Activated B cell treated with CpG ODN at 0.5 μM for 24 hours (primary cell): ENCODE measurements at regions of chr2 and their contacts with region 1.

Region 1: DNA sequence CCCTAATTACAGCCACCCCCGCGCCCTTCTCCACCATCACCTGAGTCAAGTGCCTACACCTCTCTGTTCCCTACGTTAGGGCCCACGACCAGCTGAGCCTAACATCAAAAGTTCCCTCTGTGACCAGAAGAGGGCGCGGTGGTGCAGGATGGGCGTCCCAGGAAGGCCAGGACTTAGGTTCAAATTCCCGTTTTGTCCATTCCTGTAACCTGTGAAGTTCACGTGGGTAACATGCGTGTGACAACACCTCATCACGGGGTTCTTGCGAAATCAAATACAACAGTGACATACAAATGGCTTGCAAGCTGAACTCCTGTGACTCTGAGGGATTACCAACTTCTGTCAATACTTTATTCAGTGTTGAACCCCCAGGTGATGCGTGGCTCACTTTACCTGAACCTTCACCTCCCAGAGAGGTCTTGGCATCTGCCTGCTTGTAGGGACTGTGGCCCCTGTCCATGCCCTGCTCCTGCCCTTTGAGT is 207.9 kb downstream of the ARL4C start:
- DNase-seq: peak; percentile 50
- ATAC-seq: no peak
- H3K4me3 Mint-ChIP-seq: no peak overlapping the region
- H3K27ac Mint-ChIP-seq: no peak overlapping the region
- H3K4me1 Mint-ChIP-seq: peaks cover 54% of the 10 kb centered on the region
- H3K27me3 Mint-ChIP-seq: peaks cover 17% of the 10 kb centered on the region
- CTCF ChIP-seq: no peak

Region 2: DNA sequence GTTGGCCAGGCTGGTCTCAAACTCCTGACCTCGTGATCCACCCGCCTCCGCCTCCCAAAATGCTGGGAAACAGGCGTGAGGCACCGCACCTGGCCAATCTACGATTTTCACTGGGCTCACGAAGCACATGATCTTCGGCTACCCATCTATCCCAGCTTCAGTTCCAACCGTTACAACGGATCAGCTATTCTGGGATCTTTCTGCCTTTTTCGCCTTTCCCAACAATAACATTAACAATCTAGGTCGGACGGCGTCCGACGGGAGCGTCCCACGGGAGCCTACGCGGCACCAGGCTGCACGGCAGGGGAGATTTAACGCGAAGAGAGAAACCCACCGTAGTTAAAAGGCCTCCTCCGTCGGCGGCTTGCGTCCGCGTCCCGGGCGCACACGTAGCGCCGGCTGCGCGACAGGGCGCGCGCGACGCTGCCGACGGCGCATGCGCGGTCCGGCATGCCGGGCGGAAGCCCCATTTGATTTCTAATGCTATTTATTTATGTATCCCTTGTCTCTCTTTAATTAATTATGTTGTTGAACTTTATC is 421.0 kb before region 1 on chr2 and contains the start of gene MSL3B:
- CTCF ChIA-PET with region 1: no interaction called
- POLR2A ChIA-PET with region 1: no interaction called
- intact Hi-C with region 1: no loop called
- DNase-seq: peak; percentile 57
- ATAC-seq: peak; percentile 87
- H3K4me3 Mint-ChIP-seq: peak within 1 kb of the TSS; percentile 93
- H3K27ac Mint-ChIP-seq: peak within 1 kb of the TSS; percentile 80
- H3K4me1 Mint-ChIP-seq: peaks cover 18% of the 10 kb centered on the region
- H3K27me3 Mint-ChIP-seq: no peaks in the 10 kb centered on the region
- CTCF ChIP-seq: no peak

Region 3: GRCh38 chr2:234135720-234136221 is 153.2 kb before region 1 on chr2:
- CTCF ChIA-PET with region 1: interaction called, 14 read pairs
- POLR2A ChIA-PET with region 1: interaction called, 5 read pairs
- intact Hi-C with region 1: loop called (anchors 1 kb)
- DNase-seq: peak; percentile 32
- ATAC-seq: peak; percentile 75
- H3K4me3 Mint-ChIP-seq: no peak overlapping the region
- H3K27ac Mint-ChIP-seq: peak overlapping the region; percentile 20
- H3K4me1 Mint-ChIP-seq: peaks cover 8% of the 10 kb centered on the region
- H3K27me3 Mint-ChIP-seq: peaks cover 30% of the 10 kb centered on the region
- CTCF ChIP-seq: no peak

Region 4: GRCh38 chr2:234164493-234165413 is 124.3 kb before region 1 on chr2:
- CTCF ChIA-PET with region 1: interaction called, 3 read pairs
- POLR2A ChIA-PET with region 1: interaction called, 8 read pairs
- intact Hi-C with region 1: loop called (anchors 2 kb)
- DNase-seq: peak; percentile 62
- ATAC-seq: peak; percentile 97
- H3K4me3 Mint-ChIP-seq: peak overlapping the region; percentile 48
- H3K27ac Mint-ChIP-seq: peak overlapping the region; percentile 74
- H3K4me1 Mint-ChIP-seq: peaks cover 54% of the 10 kb centered on the region
- H3K27me3 Mint-ChIP-seq: peaks cover 3% of the 10 kb centered on the region
- CTCF ChIP-seq: no peak

Region 5: GRCh38 chr2:234308813-234309195 is 19.8 kb after region 1 on chr2:
- CTCF ChIA-PET with region 1: interaction called, 9 read pairs
- POLR2A ChIA-PET with region 1: interaction called, 39 read pairs
- intact Hi-C with region 1: loop called (anchors 1 kb)
- DNase-seq: peak; percentile 43
- ATAC-seq: peak; percentile 93
- H3K4me3 Mint-ChIP-seq: peak overlapping the region; percentile 50
- H3K27ac Mint-ChIP-seq: peak overlapping the region; percentile 74
- H3K4me1 Mint-ChIP-seq: peaks cover 35% of the 10 kb centered on the region
- H3K27me3 Mint-ChIP-seq: peaks cover 33% of the 10 kb centered on the region
- CTCF ChIP-seq: no peak

Region 6: DNA sequence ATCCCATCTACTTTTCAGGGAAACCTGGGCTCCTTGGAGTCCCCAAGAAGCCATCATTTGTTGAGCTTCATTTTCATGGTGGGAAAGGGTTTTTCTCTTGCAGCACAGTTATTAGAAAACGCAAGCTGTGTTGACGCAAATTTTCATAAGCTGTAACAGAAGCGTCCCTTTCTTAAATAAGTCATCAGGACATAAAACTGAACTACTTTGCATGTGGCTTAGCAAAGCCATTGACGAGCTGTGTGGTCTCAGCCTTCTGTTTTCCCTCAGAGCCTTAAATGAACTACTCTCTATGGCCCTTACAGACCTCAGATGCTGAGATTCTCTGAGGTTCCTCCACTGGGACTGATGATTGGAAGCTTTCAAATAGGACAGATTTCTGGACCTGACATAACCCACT is 122.8 kb after region 1 on chr2:
- CTCF ChIA-PET with region 1: interaction called, 7 read pairs
- POLR2A ChIA-PET with region 1: interaction called, 4 read pairs
- intact Hi-C with region 1: loop called (anchors 5 kb)
- DNase-seq: no peak
- ATAC-seq: peak; percentile 85
- H3K4me3 Mint-ChIP-seq: peak overlapping the region; percentile 44
- H3K27ac Mint-ChIP-seq: no peak overlapping the region
- H3K4me1 Mint-ChIP-seq: peaks cover 58% of the 10 kb centered on the region
- H3K27me3 Mint-ChIP-seq: no peaks in the 10 kb centered on the region
- CTCF ChIP-seq: no peak

Region 7: GRCh38 chr2:234446404-234447076 is 157.5 kb after region 1 on chr2:
- CTCF ChIA-PET with region 1: interaction called, 3 read pairs
- POLR2A ChIA-PET with region 1: no interaction called
- intact Hi-C with region 1: loop called (anchors 1 kb)
- DNase-seq: peak; percentile 68
- ATAC-seq: peak; percentile 93
- H3K4me3 Mint-ChIP-seq: peak overlapping the region; percentile 66
- H3K27ac Mint-ChIP-seq: peak overlapping the region; percentile 96
- H3K4me1 Mint-ChIP-seq: peaks cover 83% of the 10 kb centered on the region
- H3K27me3 Mint-ChIP-seq: no peaks in the 10 kb centered on the region
- CTCF ChIP-seq: no peak

Region 8: DNA sequence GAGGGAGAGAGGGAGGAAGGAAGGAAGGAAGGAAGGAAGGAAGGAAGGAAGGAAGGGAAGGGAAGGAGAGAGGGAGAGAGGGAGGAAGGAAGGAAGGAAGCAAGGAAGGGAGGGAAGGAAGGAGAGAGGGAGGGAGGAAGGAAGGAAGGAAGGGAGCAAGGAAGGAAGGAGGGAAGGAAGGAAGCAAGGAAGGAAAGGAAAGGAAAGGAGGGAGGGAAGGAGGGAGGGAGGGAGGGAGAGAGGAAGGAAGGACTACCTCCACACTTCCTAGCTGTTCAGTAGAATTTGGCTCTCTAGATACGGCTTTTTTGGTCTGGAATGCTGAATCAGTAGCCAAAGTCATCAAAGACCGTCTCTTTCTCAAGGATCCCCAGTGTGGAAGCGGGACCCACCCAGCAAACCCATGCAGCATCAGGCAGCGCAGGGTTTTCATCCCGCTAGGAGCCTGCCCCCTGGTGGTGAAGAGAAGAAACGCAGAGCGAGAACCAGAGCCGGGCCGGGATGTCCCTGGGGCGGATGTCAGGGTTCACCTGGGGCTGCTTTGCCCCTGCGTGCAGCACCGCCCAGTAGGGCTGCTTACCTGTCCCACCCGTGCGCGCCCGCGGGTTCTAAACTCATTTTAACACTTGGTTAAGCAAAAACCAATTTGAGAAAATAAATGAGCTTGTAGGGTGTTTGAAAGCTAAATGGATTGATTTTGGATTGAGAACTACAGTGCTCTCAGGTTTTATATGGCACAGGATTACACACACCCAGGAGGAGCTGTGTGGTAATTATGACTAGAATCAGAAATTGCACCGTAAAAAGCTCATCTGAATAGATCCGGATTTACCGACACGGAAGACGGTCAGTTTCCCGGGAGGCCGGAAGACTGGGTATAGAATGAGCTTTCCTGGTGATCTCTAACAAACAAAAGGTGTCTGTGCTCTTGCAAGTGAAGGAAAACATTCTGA is 255.9 kb after region 1 on chr2:
- CTCF ChIA-PET with region 1: no interaction called
- POLR2A ChIA-PET with region 1: no interaction called
- intact Hi-C with region 1: loop called (anchors 1 kb)
- DNase-seq: peak; percentile 56
- ATAC-seq: peak; percentile 84
- H3K4me3 Mint-ChIP-seq: no peak overlapping the region
- H3K27ac Mint-ChIP-seq: no peak overlapping the region
- H3K4me1 Mint-ChIP-seq: no peaks in the 10 kb centered on the region
- H3K27me3 Mint-ChIP-seq: peaks cover 37% of the 10 kb centered on the region
- CTCF ChIP-seq: peak; percentile 33